ENCODE measurements at regions of chr17 and their contacts with region 1.

Region 1: GRCh38 chr17:82518826-82519810 is at the start of gene FOXK2:
- DNase-seq: peak; percentile 84 to 97 (median 92)
- ATAC-seq: peak; percentile 98
- H3K4me3 ChIP-seq: peak within 1 kb of the TSS; percentile 66
- H3K4me3 Mint-ChIP-seq: peak within 1 kb of the TSS; percentile 88
- H3K27ac ChIP-seq: peak within 1 kb of the TSS; percentile 50 to 71
- H3K27ac Mint-ChIP-seq: peak within 1 kb of the TSS; percentile 84
- H3K4me1 ChIP-seq: peaks cover 38% of the 10 kb centered on the region
- H3K4me1 Mint-ChIP-seq: peaks cover 25% of the 10 kb centered on the region
- H3K27me3 ChIP-seq: no peaks in the 10 kb centered on the region
- H3K27me3 Mint-ChIP-seq: no peaks in the 10 kb centered on the region
- CTCF ChIP-seq: no peak
- total RNA-seq, gene FOXK2: 32.5 to 33.7 TPM

Region 2: GRCh38 chr17:82450170-82451106 is 68.7 kb before region 1 on chr17 and contains the start of gene CYBC1:
- CTCF ChIA-PET with region 1: no interaction called
- POLR2A ChIA-PET with region 1: interaction called, 5 read pairs
- intact Hi-C with region 1: loop called in 1 of 2 experiments (anchors 2 kb)
- DNase-seq: peak; percentile 89 to 98 (median 96)
- ATAC-seq: peak; percentile 66
- H3K4me3 ChIP-seq: peak within 1 kb of the TSS; percentile 97
- H3K4me3 Mint-ChIP-seq: peak within 1 kb of the TSS; percentile 97
- H3K27ac ChIP-seq: peak within 1 kb of the TSS; percentile 90 to 96
- H3K27ac Mint-ChIP-seq: peak within 1 kb of the TSS; percentile 97
- H3K4me1 ChIP-seq: peaks cover 50% of the 10 kb centered on the region
- H3K4me1 Mint-ChIP-seq: peaks cover 48% of the 10 kb centered on the region
- H3K27me3 ChIP-seq: no peaks in the 10 kb centered on the region
- H3K27me3 Mint-ChIP-seq: no peaks in the 10 kb centered on the region
- CTCF ChIP-seq: no peak
- total RNA-seq, gene CYBC1: 60.2 to 62.4 TPM

Region 3: GRCh38 chr17:82457997-82458864 is 60.9 kb before region 1 on chr17 and contains the start of gene NARF:
- CTCF ChIA-PET with region 1: no interaction called
- POLR2A ChIA-PET with region 1: interaction called, 15 read pairs
- intact Hi-C with region 1: loop called in 1 of 2 experiments (anchors 1 kb)
- DNase-seq: peak; percentile 89 to 98 (median 96)
- ATAC-seq: peak; percentile 96
- H3K4me3 ChIP-seq: peak within 1 kb of the TSS; percentile 89
- H3K4me3 Mint-ChIP-seq: peak within 1 kb of the TSS; percentile 91
- H3K27ac ChIP-seq: peak within 1 kb of the TSS; percentile 95 to 99
- H3K27ac Mint-ChIP-seq: peak within 1 kb of the TSS; percentile 99
- H3K4me1 ChIP-seq: peaks cover 39% of the 10 kb centered on the region
- H3K4me1 Mint-ChIP-seq: peaks cover 39% of the 10 kb centered on the region
- H3K27me3 ChIP-seq: no peaks in the 10 kb centered on the region
- H3K27me3 Mint-ChIP-seq: no peaks in the 10 kb centered on the region
- CTCF ChIP-seq: no peak
- total RNA-seq, gene NARF: 57.1 to 62.0 TPM

Measured in CD4-positive, alpha-beta T cell (primary cell).